Activated naive CD4-positive, alpha-beta T cell treated with anti-CD3 and anti-CD28 coated beads for 36 hours (primary cell): ENCODE measurements at regions of chr1 and their contacts with region 1.

Region 1: DNA sequence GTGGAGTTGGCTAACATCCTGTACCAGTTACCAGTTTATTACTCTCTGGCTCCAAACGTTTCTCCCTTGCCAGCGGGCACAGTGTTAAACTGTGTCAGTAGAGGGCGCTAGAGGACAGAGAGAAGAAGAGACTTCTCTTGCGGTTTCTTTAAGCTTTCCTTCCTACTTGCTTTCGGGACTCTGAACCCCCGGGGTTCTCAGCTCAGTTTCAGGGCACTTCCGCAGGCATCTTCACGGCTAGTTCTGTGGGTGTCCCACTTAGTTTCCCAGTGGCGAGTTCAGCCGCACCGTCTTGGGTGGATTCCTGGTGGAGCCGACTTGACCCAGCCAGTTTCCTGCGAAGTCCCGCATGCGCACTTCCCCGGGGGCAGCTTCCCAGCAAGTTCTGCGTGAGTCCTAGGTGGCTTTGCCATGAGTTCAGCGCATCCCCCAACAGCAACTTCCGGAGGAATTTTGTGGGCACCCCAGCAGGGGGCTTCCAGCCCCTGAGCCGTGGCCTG is 37.9 kb upstream of the BTG2 start:
- DNase-seq: peak; percentile 90
- H3K4me3 Mint-ChIP-seq: peak overlapping the region; percentile 83
- H3K27ac Mint-ChIP-seq: peak overlapping the region; percentile 85
- H3K4me1 Mint-ChIP-seq: peaks cover 19% of the 10 kb centered on the region
- H3K27me3 Mint-ChIP-seq: no peaks in the 10 kb centered on the region

Region 2: GRCh38 chr1:202661123-202661845 is 606.1 kb before region 1 on chr1:
- CTCF ChIA-PET with region 1: no interaction called
- intact Hi-C with region 1: no loop called
- DNase-seq: no peak
- H3K4me3 Mint-ChIP-seq: no peak overlapping the region
- H3K27ac Mint-ChIP-seq: no peak overlapping the region
- H3K4me1 Mint-ChIP-seq: no peaks in the 10 kb centered on the region
- H3K27me3 Mint-ChIP-seq: peaks cover 12% of the 10 kb centered on the region

Region 3: DNA sequence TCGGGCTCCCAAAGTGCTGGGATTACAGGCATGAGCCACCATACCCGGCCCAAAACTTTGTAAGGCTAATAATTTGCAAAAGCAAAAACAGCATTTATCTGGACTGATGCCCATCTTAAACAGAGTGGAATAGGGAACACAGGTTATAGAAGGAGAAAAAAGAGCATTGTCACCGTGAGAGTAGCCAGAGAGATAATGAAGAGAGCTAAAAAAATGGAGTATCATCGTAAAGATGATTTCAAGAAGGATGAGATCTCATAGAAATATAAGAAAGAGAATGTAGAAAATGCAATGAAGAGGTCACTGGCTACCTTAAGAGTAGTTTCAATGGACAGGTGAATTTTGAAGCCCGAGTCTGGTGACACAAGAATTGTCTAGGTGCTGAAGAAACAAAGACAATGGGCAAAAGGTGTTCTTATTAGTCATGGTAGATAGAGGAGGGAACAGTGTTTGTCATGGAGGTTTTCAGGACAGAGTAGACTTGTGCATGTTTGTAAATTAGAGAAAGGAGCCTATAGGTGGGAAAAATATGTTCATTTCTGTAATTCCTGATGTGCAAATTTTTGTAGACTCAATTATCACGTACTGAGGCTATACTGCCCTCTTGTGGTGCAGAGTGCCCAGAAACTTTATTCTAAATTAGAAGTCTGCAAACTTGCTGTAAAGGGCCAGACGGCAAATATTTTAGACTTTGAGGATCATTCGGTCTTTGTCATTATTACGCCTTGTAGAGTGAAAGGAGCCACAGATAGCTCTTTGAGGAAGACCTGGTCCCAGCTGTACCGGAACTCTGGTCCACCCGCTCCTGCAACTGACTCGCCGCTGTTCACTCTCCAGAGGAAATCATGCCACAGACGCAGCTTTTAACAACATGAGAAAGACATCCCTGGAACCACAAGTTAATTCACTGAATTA is 268.3 kb before region 1 on chr1:
- CTCF ChIA-PET with region 1: no interaction called
- intact Hi-C with region 1: no loop called
- DNase-seq: peak; percentile 83
- H3K4me3 Mint-ChIP-seq: peak overlapping the region; percentile 22
- H3K27ac Mint-ChIP-seq: no peak overlapping the region
- H3K4me1 Mint-ChIP-seq: peaks cover 4% of the 10 kb centered on the region
- H3K27me3 Mint-ChIP-seq: peaks cover 26% of the 10 kb centered on the region

Region 4: GRCh38 chr1:203026031-203026989 is 241.1 kb before region 1 on chr1 and contains the start of gene PPFIA4:
- CTCF ChIA-PET with region 1: interaction called, 4 read pairs
- intact Hi-C with region 1: loop called (anchors 1 kb)
- DNase-seq: peak; percentile 88
- H3K4me3 Mint-ChIP-seq: peak within 1 kb of the TSS; percentile 70
- H3K27ac Mint-ChIP-seq: peak within 1 kb of the TSS; percentile 32
- H3K4me1 Mint-ChIP-seq: peaks cover 10% of the 10 kb centered on the region
- H3K27me3 Mint-ChIP-seq: peaks cover 2% of the 10 kb centered on the region
- total RNA-seq, gene PPFIA4: 4.5 to 6.5 TPM

Region 5: DNA sequence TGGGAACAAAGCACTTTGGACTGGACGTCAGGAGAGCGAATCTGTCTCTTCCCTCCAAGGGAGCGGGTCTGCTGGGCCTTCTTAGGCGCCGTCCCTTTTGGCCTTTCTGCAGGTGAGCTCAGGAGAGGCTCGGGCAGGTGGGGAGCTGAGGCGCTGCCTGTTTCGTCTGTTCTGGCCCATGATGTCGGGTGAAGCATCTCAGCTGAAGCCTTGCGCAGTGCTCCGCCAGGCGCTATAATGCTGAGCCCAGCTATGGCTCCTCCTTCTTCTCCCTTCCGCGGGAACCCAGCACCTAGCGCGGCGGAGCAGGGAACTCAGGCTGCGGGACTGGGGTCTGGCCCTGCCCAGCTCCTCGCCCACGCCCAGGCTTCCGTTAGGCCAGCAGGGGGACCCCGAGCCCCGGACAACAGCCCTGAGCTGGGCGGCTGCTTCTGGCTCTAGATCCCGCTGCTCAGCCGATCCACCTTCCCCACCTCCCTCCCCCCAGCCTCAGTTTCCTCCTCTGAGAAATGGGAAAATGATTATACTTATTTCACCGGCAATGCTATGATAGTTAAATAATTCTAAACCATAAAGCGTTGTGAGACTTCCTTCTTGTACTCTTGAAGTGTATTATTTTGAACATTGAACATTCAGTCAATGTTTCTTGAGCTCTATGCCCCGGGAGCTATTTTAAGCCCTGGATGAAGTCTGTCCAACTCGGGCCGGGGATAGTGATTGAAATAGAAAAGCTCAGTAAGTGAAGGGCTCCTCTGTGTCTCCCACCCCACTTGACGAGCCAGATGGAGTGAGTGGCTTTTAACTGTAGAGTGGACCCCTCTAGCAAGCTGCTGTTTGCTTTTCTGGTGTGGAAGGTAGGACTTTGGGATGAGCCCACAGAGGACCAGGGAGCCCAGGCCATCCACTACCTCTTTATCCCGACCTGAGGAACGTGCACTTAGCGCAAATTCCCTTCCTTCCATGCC is 149.5 kb before region 1 on chr1:
- CTCF ChIA-PET with region 1: interaction called, 4 read pairs
- intact Hi-C with region 1: loop called (anchors 5 kb)
- DNase-seq: peak; percentile 57
- H3K4me3 Mint-ChIP-seq: no peak overlapping the region
- H3K27ac Mint-ChIP-seq: no peak overlapping the region
- H3K4me1 Mint-ChIP-seq: no peaks in the 10 kb centered on the region
- H3K27me3 Mint-ChIP-seq: peaks cover 41% of the 10 kb centered on the region

Region 6: GRCh38 chr1:203178083-203178482 is 89.3 kb before region 1 on chr1:
- CTCF ChIA-PET with region 1: no interaction called
- intact Hi-C with region 1: no loop called
- DNase-seq: no peak
- H3K4me3 Mint-ChIP-seq: no peak overlapping the region
- H3K27ac Mint-ChIP-seq: no peak overlapping the region
- H3K4me1 Mint-ChIP-seq: no peaks in the 10 kb centered on the region
- H3K27me3 Mint-ChIP-seq: no peaks in the 10 kb centered on the region

Region 7: DNA sequence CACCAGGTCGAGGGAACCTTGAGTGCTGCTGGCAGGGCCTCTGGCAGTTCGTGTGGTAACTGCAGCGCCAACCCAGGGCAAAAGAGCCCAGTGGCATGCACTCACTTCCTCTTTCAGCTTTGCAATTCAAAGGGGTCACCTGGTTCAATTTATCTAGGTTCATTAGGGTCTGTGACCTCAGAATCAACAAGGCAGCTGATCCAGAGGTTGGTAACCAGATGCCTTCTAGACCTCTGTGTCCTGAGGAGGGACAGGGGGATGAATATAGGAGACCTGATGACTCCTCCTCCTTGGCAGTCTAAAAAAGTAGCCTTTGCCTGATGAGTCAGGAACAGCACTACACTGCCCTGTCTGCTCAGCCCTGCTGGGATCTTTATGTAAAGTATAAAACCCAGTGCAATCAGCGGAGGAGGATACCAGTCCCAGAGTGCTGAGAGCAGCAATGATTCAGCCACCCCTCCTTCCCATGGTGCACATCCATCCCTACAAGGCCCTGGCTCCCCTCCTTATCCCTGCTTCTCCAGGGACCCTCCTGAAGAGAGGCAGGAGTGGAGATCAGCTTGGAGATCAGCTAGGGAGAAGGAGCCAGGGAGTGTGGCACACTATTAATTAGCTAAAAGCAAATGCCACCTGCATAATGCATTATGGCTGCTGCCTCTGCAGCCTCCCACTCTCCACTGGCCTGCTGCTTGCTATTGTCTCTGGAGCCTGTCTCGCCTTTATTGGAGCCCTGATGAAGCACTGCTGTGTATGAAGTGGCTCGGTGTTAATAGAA is 94.7 kb after region 1 on chr1:
- CTCF ChIA-PET with region 1: interaction called, 27 read pairs
- intact Hi-C with region 1: no loop called
- DNase-seq: no peak
- H3K4me3 Mint-ChIP-seq: no peak overlapping the region
- H3K27ac Mint-ChIP-seq: no peak overlapping the region
- H3K4me1 Mint-ChIP-seq: no peaks in the 10 kb centered on the region
- H3K27me3 Mint-ChIP-seq: peaks cover 16% of the 10 kb centered on the region

Region 8: GRCh38 chr1:203486618-203487370 is 219.4 kb after region 1 on chr1:
- CTCF ChIA-PET with region 1: interaction called, 82 read pairs
- intact Hi-C with region 1: loop called (anchors 1 kb)
- DNase-seq: no peak
- H3K4me3 Mint-ChIP-seq: peak overlapping the region; percentile 67
- H3K27ac Mint-ChIP-seq: no peak overlapping the region
- H3K4me1 Mint-ChIP-seq: peaks cover 6% of the 10 kb centered on the region
- H3K27me3 Mint-ChIP-seq: no peaks in the 10 kb centered on the region

Region 9: DNA sequence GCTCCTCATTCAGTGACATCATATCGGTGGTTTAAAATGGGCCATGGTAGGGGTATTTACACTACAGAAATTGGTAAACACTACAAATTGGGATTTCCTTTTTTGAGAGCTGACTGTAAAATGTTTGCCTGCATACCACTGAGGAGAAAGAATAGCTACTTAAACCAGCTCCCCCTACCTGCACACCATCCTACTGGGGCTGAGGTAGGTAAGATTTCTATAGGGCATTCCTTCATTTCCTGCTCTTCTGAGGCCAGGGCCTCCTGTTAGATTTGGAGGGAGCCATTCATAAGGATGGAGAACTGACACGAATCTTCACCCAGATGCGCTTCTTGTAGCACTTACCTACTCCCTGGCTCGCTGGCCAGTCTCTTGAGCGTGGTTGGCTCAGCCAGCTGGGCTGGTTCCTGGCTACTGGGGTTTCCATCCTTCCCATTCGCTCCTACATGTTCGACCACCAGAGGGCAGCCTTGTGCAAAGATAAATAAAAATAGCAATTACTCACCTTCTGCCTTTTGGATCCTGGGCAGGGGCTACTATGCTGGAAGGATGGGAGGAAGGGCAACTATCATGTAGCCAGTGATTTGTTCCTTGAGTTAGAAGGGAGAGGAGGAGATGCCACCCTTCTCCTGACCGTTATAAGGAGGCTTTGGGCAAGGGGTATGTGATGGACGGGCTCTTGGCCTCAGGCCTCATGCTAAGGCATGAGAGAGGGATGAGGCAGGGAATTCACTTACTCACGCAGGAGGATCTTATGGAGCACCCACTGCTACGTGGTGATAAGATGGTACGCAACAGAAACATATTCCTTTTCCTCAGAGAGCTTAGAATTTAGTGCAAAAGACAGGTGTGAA is 237.2 kb after region 1 on chr1:
- CTCF ChIA-PET with region 1: interaction called, 11 read pairs
- intact Hi-C with region 1: no loop called
- DNase-seq: peak; percentile 91
- H3K4me3 Mint-ChIP-seq: no peak overlapping the region
- H3K27ac Mint-ChIP-seq: no peak overlapping the region
- H3K4me1 Mint-ChIP-seq: peaks cover 6% of the 10 kb centered on the region
- H3K27me3 Mint-ChIP-seq: no peaks in the 10 kb centered on the region

Region 10: GRCh38 chr1:203726417-203726867 is 459.0 kb after region 1 on chr1:
- CTCF ChIA-PET with region 1: no interaction called
- intact Hi-C with region 1: no loop called
- DNase-seq: no peak
- H3K4me3 Mint-ChIP-seq: no peak overlapping the region
- H3K27ac Mint-ChIP-seq: no peak overlapping the region
- H3K4me1 Mint-ChIP-seq: no peaks in the 10 kb centered on the region
- H3K27me3 Mint-ChIP-seq: no peaks in the 10 kb centered on the region